Dendritic cell treated with granulocyte-macrophage colony-stimulating factor and Interleukin-4, amounts not matched to agents 40 ng/mL and 50 ng/mL, for 4 days (primary cell): ENCODE measurements at regions of chr2 and their contacts with region 1.

Region 1: DNA sequence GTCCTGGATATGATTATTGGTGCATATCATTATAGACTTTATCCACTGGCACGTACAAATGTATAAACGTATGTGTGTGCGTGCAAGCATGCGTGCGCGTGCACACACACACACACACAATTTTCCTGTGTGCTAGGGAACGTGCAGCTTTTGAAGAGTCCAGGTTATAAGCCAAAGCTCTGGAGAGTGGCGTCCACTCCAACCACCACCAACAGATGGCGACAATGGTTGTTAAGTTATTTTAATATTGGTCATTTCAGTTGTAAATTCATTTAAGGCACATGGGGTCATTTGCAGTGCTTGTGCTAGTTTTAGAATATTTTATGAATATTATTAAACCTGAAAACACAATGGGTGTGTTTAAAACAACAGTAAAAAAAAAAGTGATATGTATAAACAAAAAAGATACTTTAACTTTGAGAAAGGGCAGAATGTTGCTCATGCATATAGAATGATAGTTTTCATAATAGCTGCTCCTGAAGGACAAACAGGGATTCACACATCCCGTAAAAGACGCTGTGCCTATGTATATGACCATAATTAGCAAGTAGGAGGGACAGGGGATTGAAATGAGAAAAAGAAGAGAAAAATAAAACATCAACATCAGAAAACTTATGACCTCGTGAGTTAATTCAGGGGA is 124.2 kb upstream of the ITGB6 start:
- H3K4me3 Mint-ChIP-seq: no peak overlapping the region
- H3K27ac Mint-ChIP-seq: peak overlapping the region; percentile 61
- H3K4me1 Mint-ChIP-seq: peaks cover 63% of the 10 kb centered on the region
- H3K27me3 Mint-ChIP-seq: no peaks in the 10 kb centered on the region

Region 2: DNA sequence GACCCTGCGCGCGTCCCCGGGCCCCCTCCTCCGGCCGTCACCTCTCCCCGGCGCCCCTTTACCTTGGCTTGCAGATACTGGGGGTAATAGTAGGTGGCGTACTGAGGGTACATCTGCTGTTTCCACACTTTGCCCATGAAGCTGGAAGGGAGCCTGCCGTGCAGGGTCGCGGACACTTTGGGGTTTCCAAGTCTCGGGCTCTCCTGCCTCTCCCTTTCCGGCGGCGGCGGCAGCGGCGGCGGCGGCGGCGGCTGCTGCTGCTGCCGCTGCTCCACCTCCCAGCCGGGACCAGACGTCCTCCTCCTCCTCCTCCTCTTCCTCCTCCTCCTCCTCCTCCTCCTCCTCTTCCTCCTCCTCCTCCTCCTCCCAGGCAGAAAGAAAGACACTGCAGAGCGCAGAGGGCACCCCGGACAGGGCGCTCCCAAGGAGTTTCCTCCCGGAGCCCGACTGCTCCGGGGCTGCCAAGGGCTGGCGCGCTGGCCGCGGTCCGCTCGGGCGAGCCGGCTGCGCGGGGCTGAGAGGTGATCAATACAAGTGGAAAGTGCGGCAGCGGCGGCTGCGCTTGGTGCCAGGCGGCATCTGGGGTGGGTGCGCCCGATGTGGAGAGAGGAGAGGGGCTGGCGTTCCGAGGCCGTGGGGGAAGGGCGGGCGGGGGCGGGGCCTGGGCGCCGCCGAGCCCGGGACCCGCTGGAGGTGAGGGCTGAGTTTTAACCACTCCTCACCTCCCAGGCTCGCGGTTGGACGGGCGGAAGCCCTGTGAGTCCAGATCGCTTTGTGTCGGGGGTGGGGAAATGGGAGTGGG is 169.1 kb after region 1 on chr2 and contains the start of gene RBMS1:
- intact Hi-C with region 1: loop called (anchors 10 kb)
- H3K4me3 Mint-ChIP-seq: peak within 1 kb of the TSS; percentile 90
- H3K27ac Mint-ChIP-seq: peak within 1 kb of the TSS; percentile 83
- H3K4me1 Mint-ChIP-seq: peaks cover 23% of the 10 kb centered on the region
- H3K27me3 Mint-ChIP-seq: peaks cover 20% of the 10 kb centered on the region

Region 3: DNA sequence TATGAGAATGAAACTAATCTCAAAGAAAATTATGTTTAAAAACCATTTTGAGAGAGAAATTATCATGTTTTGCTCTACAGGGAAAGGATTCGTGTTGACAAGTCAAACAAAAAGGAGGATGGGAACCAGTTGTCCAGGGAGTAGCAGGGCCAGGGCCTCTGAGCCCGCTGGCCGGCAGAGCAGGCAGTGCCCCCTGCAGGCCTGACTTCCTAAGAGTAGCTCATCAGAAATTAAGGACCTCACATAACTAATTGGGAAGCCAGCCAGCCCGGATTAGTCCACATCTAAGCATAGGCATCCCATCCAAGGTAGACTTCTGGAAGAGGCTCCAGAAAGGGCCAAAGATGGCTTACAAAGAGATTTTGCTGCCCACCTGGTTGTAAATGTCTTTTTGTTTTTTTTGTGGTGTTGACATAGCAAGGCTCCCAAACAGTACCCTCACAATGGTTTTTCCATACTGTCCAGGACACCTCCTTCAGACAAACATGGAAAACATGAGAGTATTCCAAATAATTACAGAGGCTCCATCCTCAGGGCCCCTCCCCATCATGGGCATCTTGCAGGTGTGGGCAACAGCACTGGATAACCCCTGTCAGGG is 594.7 kb after region 1 on chr2:
- intact Hi-C with region 1: loop called (anchors 5 kb)
- H3K4me3 Mint-ChIP-seq: no peak overlapping the region
- H3K27ac Mint-ChIP-seq: no peak overlapping the region
- H3K4me1 Mint-ChIP-seq: peaks cover 12% of the 10 kb centered on the region
- H3K27me3 Mint-ChIP-seq: no peaks in the 10 kb centered on the region

Region 4: DNA sequence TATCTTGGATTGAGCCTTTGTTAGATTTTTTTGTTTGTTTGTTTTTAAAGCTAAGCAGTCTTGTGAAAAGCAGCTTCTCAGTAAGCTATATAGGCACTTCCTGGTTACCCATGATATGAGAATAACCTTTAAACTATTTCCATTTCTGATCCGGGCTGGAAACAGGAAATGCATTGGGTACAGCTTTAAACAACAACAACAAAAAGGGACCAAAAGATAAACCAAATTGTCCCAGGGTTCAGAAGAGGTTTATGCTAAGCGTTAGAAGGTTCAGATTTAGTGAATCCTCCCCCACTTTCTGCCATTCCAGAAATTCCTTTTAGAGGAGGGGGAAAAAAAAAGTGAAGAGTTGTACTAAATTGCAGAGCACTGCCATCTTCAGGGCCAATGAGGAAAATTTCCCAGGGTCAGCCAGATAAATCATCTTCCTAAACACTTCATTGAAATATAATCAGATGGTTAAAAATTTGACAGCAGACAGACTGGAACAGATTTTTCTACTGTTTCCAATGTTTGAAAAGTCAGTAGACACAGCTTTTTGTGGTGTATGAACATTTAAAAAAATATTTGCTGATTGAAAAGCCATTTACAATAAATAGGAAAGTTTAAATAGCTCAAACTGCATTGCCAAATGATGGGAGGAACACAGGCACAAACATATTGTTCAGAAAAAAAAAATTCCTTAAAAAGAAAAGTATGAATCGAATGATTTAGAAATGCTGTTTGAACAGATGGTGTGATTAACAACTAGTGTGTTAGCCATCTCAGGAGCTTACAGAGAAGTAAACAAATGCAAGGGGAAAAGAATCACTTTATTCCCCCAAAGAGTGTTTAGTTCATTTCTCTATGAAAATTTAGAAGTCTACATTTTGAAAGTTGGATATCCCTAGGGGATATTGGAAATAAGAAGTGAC is 646.0 kb after region 1 on chr2:
- intact Hi-C with region 1: loop called (anchors 10 kb)
- H3K4me3 Mint-ChIP-seq: peak overlapping the region; percentile 13
- H3K27ac Mint-ChIP-seq: no peak overlapping the region
- H3K4me1 Mint-ChIP-seq: no peaks in the 10 kb centered on the region
- H3K27me3 Mint-ChIP-seq: peaks cover 3% of the 10 kb centered on the region